Gastrocnemius medialis (tissue), 4 donors: ENCODE measurements at regions of chr2 and their contacts with region 1.

Region 1: GRCh38 chr2:129296811-129297221 is 682.6 kb upstream of the RAB6C start:
- DNase-seq: peak in 1 of 2 donors; percentile 8
- ATAC-seq: peak in 1 of 2 donors; percentile 40
- H3K4me3 ChIP-seq: no peak overlapping the region
- H3K27ac ChIP-seq: peak overlapping the region in 2 of 4 donors; percentile 10 to 47
- H3K4me1 ChIP-seq: peaks cover 3 to 22% of the 10 kb centered on the region in 2 donors
- H3K27me3 ChIP-seq: no peaks in the 10 kb centered on the region
- CTCF ChIP-seq: no peak
- POLR2A ChIP-seq: no peak

Region 2: DNA sequence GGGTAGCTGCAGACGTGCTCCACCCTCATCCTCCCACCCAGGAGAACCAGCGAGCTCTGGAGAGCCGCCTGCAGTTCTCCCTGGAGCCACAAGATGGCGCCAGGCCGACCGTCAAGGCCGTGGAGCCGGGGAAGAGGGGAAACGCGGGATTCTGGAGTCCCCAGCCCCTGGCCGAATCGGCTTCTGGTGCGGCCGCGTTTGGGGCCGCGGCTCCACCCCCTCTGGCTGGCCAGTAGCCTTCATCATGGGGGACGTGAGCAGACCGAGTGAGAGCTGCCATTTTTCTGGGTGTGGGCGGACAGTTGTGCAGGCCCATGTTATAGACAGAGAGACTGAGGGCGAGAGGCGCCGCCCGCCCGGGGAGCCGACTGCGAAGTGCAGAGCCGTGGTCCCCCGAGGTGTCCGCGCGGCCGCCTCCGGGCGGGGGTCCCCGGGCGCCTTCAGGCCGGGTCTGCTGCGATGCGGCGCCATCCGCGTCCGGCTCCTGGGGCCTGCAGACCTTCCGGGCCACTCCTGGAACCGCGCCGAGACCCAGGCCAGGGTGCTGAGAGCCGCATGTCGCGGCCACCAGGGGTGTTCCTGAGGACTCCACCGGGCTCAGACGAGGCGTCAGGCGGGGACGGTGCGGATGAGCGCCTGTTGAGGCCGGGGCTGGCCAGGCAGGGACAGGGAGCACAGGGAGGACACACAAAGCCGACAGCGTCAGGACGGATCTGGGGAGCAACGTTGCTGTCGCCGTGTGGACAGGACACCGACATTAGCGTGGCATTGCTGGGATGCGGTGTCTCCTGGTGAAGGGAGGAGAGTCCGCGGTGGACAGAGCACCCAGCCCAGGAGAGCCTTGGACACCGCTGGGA is 559.9 kb before region 1 on chr2:
- in situ Hi-C with region 1: no loop called
- intact Hi-C with region 1: loop called (anchors 5 kb)
- DNase-seq: peak; percentile 41 to 57
- ATAC-seq: peak; percentile 65 to 75
- H3K4me3 ChIP-seq: peak overlapping the region; percentile 26 to 52 (median 46)
- H3K27ac ChIP-seq: no peak overlapping the region
- H3K4me1 ChIP-seq: peaks cover 8 to 11% of the 10 kb centered on the region in 2 donors
- H3K27me3 ChIP-seq: no peaks in the 10 kb centered on the region
- CTCF ChIP-seq: peak; percentile 83 to 98 (median 87)
- POLR2A ChIP-seq: no peak

Region 3: DNA sequence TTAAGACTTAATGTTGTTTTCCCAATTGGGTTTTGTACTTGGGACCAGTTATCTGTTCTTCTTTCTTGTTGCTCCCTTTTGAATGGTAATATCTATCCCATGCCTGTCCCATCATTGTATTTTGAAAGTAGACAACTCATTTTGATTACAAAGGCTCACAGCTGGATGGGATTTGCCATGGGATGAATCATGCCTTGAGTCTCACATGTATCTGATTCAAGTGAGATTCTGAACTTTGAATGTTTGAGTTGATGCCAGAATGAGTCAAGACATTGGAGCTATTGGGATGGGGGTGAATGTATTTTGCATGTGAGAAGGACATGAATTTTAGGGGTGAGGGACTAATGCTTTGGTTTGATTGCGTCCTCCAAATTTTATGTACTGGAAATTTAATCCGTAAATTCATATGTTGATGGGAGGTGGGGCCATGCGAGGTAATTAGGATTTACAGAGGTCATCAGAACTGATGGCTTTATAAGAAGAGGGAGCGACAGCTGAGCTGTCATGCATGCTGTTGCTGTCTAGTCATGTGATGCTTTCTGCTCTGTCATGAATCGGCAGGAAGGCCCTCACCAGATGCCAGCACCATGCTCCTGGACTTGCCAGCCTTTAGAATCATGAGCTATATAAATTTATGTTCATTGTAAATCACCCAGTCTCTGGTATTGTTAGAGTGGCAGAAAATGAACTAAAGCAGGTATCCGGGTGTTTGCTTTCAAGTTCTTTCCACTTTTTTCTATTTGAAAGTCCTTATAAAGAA is 58.7 kb before region 1 on chr2:
- in situ Hi-C with region 1: no loop called
- intact Hi-C with region 1: loop called (anchors 1 kb)
- DNase-seq: no peak
- ATAC-seq: no peak
- H3K4me3 ChIP-seq: no peak overlapping the region
- H3K27ac ChIP-seq: no peak overlapping the region
- H3K4me1 ChIP-seq: peaks cover 0 to 10% of the 10 kb centered on the region in 2 donors
- H3K27me3 ChIP-seq: no peaks in the 10 kb centered on the region
- CTCF ChIP-seq: no peak
- POLR2A ChIP-seq: no peak

Region 4: DNA sequence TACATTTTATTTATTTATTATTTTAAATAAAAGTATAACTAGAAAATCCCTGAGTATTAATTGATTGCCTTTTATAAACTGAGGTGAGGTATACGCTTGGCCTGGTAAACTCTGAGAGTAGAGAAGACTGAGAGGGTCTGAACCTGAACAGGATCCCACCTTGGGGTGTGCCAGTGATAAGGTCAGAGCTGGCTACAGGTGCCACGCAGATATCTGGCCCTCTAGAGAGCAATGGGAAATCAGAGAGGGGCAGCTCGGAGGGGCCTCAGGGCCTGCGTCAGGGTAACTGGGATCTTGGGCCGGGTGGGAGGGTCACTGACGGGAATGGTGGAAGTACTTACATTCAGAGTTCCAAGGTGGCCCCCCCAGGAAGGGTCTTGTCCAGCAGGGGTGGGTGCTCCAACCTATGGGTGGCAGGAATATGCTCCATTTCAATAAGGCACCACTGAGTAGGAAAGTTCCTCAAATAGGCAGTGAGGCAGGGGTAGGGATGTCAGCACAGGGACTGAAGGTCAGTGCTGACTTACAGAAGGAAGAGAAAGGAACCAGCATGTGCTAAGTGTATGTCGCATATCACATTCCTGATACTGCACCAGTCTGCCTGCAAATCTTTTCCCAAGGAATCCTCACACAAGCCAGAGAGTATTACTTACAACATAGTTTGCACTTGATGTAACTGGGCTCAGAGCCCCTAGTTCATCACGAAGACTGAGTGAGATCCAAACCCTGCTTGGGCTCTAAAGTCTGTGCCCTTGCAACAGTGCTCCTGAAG is 23.4 kb before region 1 on chr2:
- in situ Hi-C with region 1: no loop called
- intact Hi-C with region 1: loop called (anchors 1 kb)
- DNase-seq: no peak
- ATAC-seq: peak; percentile 87 to 94
- H3K4me3 ChIP-seq: peak overlapping the region in 3 of 4 donors; percentile 19 to 30 (median 23)
- H3K27ac ChIP-seq: peak overlapping the region; percentile 59 to 81 (median 70)
- H3K4me1 ChIP-seq: peaks cover 4 to 17% of the 10 kb centered on the region in 2 donors
- H3K27me3 ChIP-seq: no peaks in the 10 kb centered on the region
- CTCF ChIP-seq: no peak
- POLR2A ChIP-seq: no peak

Region 5: GRCh38 chr2:129336276-129336675 is 39.5 kb after region 1 on chr2:
- in situ Hi-C with region 1: no loop called
- intact Hi-C with region 1: loop called (anchors 1 kb)
- DNase-seq: no peak
- ATAC-seq: peak; percentile 61 to 74
- H3K4me3 ChIP-seq: no peak overlapping the region
- H3K27ac ChIP-seq: peak overlapping the region; percentile 78 to 95 (median 88)
- H3K4me1 ChIP-seq: peaks cover 20 to 23% of the 10 kb centered on the region in 2 donors
- H3K27me3 ChIP-seq: no peaks in the 10 kb centered on the region
- CTCF ChIP-seq: no peak
- POLR2A ChIP-seq: no peak

Region 6: DNA sequence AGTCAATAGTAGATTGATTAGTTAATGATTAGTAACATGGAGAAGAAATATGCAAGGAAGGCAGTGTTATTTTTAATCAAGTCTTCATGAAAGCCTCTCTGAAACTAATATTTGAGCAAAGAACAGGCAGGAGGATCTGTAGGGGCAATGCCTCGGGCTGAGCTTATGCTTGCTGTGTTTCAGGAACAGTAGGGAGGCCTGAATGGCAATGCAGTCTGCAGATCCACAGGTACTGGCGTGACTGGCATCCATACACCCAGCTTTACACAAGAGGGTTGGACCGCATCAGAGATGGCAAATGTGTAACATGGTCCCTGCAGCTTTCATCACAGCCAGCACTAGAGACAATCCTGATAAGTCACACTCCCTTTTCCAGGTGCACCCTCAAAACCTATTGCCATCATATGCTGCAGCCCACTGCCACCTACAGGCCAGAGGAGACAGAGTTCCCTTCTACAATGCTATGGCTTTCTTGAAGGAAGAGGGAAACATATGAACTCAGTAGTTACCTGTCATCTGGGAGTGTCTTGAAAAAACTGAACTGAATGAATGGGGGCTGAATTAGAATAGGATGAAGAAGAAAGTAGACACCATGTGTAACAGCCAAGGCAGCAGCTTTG is 100.3 kb after region 1 on chr2:
- in situ Hi-C with region 1: no loop called
- intact Hi-C with region 1: loop called (anchors 5 kb)
- DNase-seq: peak; percentile 44 to 74
- ATAC-seq: peak; percentile 87 to 99
- H3K4me3 ChIP-seq: no peak overlapping the region
- H3K27ac ChIP-seq: no peak overlapping the region
- H3K4me1 ChIP-seq: no peaks in the 10 kb centered on the region
- H3K27me3 ChIP-seq: no peaks in the 10 kb centered on the region
- CTCF ChIP-seq: peak; percentile 37 to 74 (median 61)
- POLR2A ChIP-seq: no peak